ENCODE measurements at regions of chr17 and their contacts with region 1.

Region 1: GRCh38 chr17:43628089-43628650 is 33.6 kb downstream of the MEOX1 start:
- DNase-seq: no peak
- H3K4me3 ChIP-seq: no peak overlapping the region
- H3K4me3 Mint-ChIP-seq: peak overlapping the region; percentile 36
- H3K27ac Mint-ChIP-seq: peak overlapping the region; percentile 69
- H3K4me1 ChIP-seq: peaks cover 54% of the 10 kb centered on the region
- H3K4me1 Mint-ChIP-seq: peaks cover 27% of the 10 kb centered on the region
- H3K27me3 ChIP-seq: no peaks in the 10 kb centered on the region
- H3K27me3 Mint-ChIP-seq: no peaks in the 10 kb centered on the region
- CTCF ChIP-seq: no peak

Region 2: DNA sequence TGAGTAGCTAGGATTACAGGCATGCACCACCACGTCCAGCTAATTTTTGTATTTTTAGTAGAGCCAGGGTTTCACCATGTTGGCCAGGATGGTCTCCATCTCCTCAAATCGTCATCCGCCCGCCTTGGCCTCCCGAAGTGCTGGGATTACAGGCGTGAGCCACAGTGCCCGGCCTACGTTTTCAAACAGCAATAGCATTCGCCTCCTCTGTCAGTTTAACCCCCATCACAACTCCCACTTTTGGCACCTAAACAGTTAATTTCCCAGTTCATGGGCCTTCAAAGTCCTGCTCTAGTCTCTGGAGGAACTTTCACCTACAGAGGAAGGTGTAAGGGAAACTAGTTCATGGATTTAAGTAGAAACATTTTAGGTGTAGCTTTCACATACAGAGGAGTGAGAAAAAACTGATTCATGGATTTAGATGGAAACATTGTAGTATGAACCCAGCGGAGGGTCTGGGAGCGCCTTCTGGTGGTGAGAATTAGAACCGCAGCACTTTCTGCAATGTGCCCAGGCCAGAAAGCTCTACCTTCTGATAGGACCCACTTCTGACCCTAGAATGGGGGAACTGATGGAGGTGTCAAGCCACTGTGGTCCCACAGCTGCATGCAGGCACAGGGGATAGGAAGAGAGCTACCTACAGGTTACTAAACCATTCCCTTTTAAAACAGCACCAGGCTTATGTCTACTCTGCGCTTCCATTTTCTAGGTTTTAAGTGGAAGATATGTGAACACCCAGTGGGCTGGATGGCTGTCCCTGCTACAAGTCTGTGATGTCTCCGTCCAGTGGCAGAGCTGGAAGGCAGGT is 45.5 kb after region 1 on chr17:
- CTCF ChIA-PET with region 1: interaction called, 5 read pairs
- POLR2A ChIA-PET with region 1: no interaction called
- intact Hi-C with region 1: loop called (anchors 2 kb)
- DNase-seq: peak; percentile 78 to 86
- H3K4me3 ChIP-seq: no peak overlapping the region
- H3K4me3 Mint-ChIP-seq: no peak overlapping the region
- H3K27ac Mint-ChIP-seq: peak overlapping the region; percentile 90
- H3K4me1 ChIP-seq: peaks cover 75% of the 10 kb centered on the region
- H3K4me1 Mint-ChIP-seq: peaks cover 71% of the 10 kb centered on the region
- H3K27me3 ChIP-seq: no peaks in the 10 kb centered on the region
- H3K27me3 Mint-ChIP-seq: no peaks in the 10 kb centered on the region
- CTCF ChIP-seq: peak; percentile 94 to 97

Measured in Caco-2 (cell line).